Calu3 (cell line): ENCODE measurements at regions of chr15 and their contacts with region 1.

Region 1: DNA sequence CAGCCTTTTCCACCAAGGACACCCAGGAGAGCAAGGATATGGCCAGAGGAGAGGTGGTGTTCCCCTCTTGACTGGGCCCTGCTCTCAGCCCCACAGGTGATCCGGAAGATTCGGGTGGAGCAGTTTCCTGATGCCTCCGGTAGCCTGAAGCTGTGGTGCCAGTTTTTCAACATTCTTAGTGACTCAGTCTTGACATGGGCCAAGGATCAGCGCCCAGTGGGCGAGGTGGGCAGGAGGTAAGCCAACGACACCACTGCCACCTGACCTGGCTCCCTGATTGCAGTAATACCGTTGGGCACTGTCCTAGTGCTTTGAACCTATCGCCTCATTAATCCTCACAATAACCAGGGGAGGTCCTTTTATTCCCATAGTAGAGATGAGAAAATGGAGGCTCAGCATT is 25.3 kb upstream of the SLC28A1 start:
- DNase-seq: peak; percentile 94
- H3K4me3 Mint-ChIP-seq: peak overlapping the region; percentile 16
- H3K27ac Mint-ChIP-seq: peak overlapping the region; percentile 94
- H3K4me1 Mint-ChIP-seq: peaks cover 66% of the 10 kb centered on the region
- H3K27me3 Mint-ChIP-seq: no peaks in the 10 kb centered on the region
- CTCF ChIP-seq: no peak

Region 2: DNA sequence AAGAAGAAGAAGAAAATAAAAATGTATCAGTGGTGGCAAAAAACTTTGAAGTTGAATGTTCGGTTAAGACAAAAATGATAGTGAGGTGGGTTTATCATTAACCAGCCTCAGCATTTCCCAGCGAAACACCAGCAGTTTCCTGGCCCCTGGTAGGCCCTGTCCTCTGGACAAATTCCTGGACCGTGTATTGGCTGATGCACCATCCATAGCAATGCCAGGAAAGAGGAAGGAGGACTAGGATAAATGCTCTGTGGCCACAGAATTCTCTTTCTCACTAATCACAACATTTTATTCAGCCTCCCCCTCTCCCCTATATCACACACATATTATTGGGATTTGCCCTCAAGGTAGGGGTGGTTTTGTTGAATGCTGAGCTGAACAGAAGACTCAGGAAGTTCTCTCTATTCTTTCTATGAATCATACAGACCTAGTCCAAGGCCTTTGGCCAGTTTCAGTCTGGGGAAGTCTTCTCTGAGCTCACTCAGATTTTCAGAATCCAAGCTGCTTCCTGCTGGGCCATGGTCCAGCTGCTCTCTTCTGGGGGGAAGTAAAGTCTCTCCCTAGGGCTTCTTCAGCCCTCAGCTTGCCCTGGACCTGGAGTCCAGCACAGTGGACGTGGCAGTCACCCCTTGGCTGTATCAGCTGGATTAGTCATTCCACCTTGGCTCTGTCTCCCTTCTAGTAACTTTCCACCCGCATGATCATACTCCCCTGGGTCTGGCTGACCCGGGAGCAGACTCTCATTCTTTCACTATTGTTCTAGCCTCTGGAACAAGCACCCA is 52.9 kb after region 1 on chr15:
- CTCF ChIA-PET with region 1: no interaction called
- intact Hi-C with region 1: loop called (anchors 1 kb)
- DNase-seq: peak; percentile 85
- H3K4me3 Mint-ChIP-seq: peak overlapping the region; percentile 54
- H3K27ac Mint-ChIP-seq: peak overlapping the region; percentile 99
- H3K4me1 Mint-ChIP-seq: peaks cover 57% of the 10 kb centered on the region
- H3K27me3 Mint-ChIP-seq: no peaks in the 10 kb centered on the region
- CTCF ChIP-seq: no peak